ENCODE measurements at regions of chr11 and their contacts with region 1.

Region 1: DNA sequence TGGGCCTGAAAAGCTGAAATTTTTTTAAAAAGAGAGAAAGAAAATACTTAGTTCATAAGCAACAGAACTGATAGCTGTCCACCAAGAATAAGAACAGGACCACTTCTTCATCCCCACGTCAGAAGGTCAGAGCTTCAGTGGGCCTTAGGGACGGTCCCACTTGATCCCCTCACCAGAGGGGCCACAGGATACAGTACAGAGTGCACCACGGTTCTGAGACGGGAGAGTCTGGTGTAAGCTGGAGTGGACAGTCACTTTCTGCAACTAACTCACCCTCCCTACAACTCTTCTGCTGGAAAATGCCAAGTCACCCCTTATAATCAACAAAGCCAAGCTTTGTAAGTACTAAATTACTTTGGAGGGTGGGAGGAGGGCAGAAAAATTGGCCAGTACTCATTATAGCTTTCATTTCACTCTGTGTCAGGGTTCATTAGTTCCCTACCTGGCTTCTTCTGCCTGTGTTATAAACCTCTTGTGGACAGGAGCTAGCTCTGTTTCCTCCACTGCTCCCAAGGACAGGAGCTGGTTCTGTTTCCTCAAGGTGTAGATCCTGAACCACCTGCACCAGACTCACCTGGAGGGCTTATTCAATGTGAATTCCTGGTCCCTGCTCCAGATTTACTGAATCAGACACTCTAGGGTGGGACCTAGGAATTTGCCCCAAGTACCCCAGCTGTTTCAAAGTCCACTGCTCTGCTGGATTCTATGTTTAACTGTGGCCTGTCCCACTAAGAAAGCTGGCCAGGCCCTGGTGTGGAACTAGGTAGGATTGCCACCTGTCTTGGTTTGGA is 39.6 kb downstream of the SCGB1A1 start:
- DNase-seq: no peak
- ATAC-seq: no peak
- H3K4me3 Mint-ChIP-seq: no peak overlapping the region
- H3K27ac Mint-ChIP-seq: no peak overlapping the region
- H3K4me1 Mint-ChIP-seq: peaks cover 8% of the 10 kb centered on the region
- H3K27me3 Mint-ChIP-seq: no peaks in the 10 kb centered on the region
- CTCF ChIP-seq: no peak

Region 2: DNA sequence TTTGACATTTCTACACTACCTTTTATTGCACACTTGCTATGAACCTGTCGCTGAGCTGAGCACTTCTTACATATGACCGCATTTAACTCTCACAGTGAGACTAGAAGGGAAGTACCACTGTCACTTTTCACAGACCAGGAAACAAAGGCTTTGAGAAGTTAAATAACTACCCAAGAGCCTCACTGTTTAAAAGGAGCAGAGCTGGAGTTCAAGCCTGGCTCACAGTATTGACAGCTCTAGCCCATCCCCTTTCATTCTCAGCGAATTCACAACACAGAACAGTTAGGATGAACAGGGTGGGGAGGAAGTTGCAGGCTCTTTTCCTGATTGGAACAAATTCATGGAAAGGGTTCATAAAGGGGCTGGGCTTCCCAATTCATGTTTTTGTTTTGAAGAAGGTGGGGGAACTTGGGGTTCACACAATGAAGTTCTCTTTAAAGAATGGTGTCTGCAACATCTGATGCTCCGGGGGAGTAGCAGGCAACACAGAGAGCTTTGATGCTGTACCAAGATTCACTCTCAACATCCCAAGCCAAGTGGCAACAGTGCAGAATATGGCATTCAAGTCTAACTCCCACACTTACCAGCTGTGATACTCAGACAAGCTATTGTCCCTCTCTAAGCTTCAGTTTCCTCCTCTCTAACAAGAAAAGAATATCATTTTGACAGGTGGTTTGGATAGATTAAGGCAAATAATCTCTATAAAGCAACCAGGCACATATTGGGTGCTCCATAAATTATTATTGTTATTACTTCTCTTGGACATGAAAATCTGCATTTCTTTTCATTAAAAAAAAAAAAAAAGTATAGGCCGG is 22.4 kb before region 1 on chr11:
- CTCF ChIA-PET with region 1: no interaction called
- POLR2A ChIA-PET with region 1: interaction called, 15 read pairs
- intact Hi-C with region 1: no loop called
- DNase-seq: no peak
- ATAC-seq: peak; percentile 66
- H3K4me3 Mint-ChIP-seq: no peak overlapping the region
- H3K27ac Mint-ChIP-seq: peak overlapping the region; percentile 5
- H3K4me1 Mint-ChIP-seq: peaks cover 36% of the 10 kb centered on the region
- H3K27me3 Mint-ChIP-seq: no peaks in the 10 kb centered on the region
- CTCF ChIP-seq: no peak

Region 3: GRCh38 chr11:62472012-62472884 is 13.8 kb after region 1 on chr11:
- CTCF ChIA-PET with region 1: no interaction called
- POLR2A ChIA-PET with region 1: no interaction called
- intact Hi-C with region 1: no loop called
- DNase-seq: no peak
- ATAC-seq: no peak
- H3K4me3 Mint-ChIP-seq: no peak overlapping the region
- H3K27ac Mint-ChIP-seq: no peak overlapping the region
- H3K4me1 Mint-ChIP-seq: no peaks in the 10 kb centered on the region
- H3K27me3 Mint-ChIP-seq: no peaks in the 10 kb centered on the region
- CTCF ChIP-seq: no peak

Measured in activated B cell treated with CpG ODN at 0.5 μM for 24 hours (primary cell).